ENCODE measurements at regions of chr12 and their contacts with region 1.

Region 1: DNA sequence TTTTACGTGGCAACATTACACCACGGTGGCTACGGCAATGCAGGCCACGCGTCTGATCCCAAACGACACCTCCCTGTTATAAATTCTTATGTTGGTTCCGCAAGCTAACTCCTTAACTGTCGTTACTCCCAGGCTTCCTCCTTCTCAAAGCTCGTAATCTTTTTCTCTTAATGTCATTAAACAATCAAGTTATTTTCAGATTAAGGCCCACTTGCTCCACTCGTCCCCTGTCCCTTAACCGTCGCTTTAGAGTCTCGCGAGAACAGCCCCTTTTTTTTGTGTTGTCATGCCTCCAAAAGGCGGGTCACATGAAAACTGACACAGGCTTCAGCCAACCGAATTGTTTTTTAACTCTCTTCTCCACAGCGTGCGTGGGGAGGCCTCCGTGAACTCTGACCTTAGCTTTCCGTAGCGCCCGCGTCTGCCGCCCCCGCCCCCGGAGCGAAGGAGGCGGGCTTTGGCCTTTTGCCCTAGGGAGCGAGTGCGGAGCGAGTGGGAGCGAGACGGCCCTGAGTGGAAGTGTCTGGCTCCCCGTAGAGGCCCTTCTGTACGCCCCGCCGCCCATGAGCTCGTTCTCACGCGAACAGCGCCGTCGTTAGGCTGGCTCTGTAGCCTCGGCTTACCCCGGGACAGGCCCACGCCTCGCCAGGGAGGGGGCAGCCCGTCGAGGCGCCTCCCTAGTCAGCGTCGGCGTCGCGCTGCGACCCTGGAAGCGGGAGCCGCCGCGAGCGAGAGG is at the start of gene CAND1:
- DNase-seq: peak; percentile 99
- ATAC-seq: peak; percentile 82
- H3K4me3 ChIP-seq: peak within 1 kb of the TSS; percentile 79
- H3K27ac ChIP-seq: peak within 1 kb of the TSS; percentile 96
- H3K4me1 ChIP-seq: peaks cover 13% of the 10 kb centered on the region
- H3K27me3 ChIP-seq: no peaks in the 10 kb centered on the region
- CTCF ChIP-seq: peak; percentile 9 to 30 (median 20); a peak in 1 of 6 replicates
- EP300 ChIP-seq: peak in 1 of 2 experiments; percentile 65; a peak in 1 of 4 replicates
- POLR2A ChIP-seq: peak; percentile 94
- RAD21 ChIP-seq: no peak
- polyA plus RNA-seq, gene CAND1: 34.5 to 44.0 TPM

Region 2: GRCh38 chr12:67025543-67026114 is 243.4 kb before region 1 on chr12:
- CTCF ChIA-PET with region 1: no interaction called
- POLR2A ChIA-PET with region 1: no interaction called
- RAD21 ChIA-PET with region 1: no interaction called
- SMC1A ChIA-PET with region 1: no interaction called
- in situ Hi-C with region 1: no loop called
- intact Hi-C with region 1: no loop called
- DNase-seq: no peak
- ATAC-seq: peak; percentile 82
- H3K4me3 ChIP-seq: no peak overlapping the region
- H3K27ac ChIP-seq: no peak overlapping the region
- H3K4me1 ChIP-seq: no peaks in the 10 kb centered on the region
- H3K27me3 ChIP-seq: no peaks in the 10 kb centered on the region
- CTCF ChIP-seq: peak; percentile 53 to 77 (median 69); a peak in 5 of 6 replicates
- EP300 ChIP-seq: no peak
- POLR2A ChIP-seq: no peak
- RAD21 ChIP-seq: peak; percentile 57

Region 3: GRCh38 chr12:67161322-67161918 is 107.6 kb before region 1 on chr12:
- CTCF ChIA-PET with region 1: interaction called, 12 read pairs
- POLR2A ChIA-PET with region 1: no interaction called
- RAD21 ChIA-PET with region 1: interaction called, 16 read pairs
- SMC1A ChIA-PET with region 1: interaction called, 7 read pairs
- in situ Hi-C with region 1: no loop called
- intact Hi-C with region 1: loop called (anchors 5 kb)
- DNase-seq: no peak
- ATAC-seq: peak; percentile 82
- H3K4me3 ChIP-seq: no peak overlapping the region
- H3K27ac ChIP-seq: no peak overlapping the region
- H3K4me1 ChIP-seq: no peaks in the 10 kb centered on the region
- H3K27me3 ChIP-seq: no peaks in the 10 kb centered on the region; a peak in 1 of 4 replicates
- CTCF ChIP-seq: peak; percentile 46 to 58 (median 56)
- EP300 ChIP-seq: no peak
- POLR2A ChIP-seq: no peak
- RAD21 ChIP-seq: peak; percentile 59

Region 4: DNA sequence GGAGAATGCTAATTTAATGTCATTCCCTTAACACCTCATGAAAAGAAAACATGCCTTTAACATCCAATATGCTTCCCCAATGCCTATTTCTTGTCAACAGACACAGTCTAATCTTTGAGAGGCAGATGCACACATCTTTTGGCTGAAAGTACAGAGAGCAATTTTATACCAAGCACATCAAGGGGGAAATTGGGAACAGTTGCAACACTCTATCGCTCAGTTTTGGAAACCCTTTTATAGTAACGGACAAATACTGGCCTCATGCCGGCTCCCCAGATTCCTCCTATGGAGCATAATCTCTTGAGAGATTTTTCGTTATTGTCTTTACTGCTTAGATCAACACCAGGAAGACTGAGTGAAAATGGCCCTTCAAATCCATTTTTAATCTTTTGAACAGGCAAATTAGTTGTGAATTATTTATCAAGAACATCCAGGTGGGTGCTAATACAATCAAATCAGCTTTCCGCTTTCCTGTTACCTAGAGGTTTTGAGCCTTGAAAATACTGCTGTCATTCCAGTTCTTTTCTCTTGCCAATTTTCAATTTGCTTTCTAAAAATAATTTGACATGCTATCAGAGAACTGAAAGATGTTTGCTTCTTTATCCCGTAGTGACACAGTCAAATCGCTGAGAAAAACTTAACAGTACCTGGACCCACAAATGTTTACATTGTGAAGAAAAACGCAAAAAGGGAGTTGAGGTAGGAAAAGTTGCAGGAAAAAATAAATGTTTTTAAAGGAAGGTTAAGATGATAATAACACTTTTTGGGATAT is 60.6 kb before region 1 on chr12:
- CTCF ChIA-PET with region 1: no interaction called
- POLR2A ChIA-PET with region 1: no interaction called
- RAD21 ChIA-PET with region 1: no interaction called
- SMC1A ChIA-PET with region 1: no interaction called
- in situ Hi-C with region 1: no loop called
- intact Hi-C with region 1: no loop called
- DNase-seq: no peak
- ATAC-seq: no peak
- H3K4me3 ChIP-seq: no peak overlapping the region
- H3K27ac ChIP-seq: no peak overlapping the region
- H3K4me1 ChIP-seq: no peaks in the 10 kb centered on the region
- H3K27me3 ChIP-seq: no peaks in the 10 kb centered on the region; a peak in 1 of 4 replicates
- CTCF ChIP-seq: no peak
- EP300 ChIP-seq: no peak
- POLR2A ChIP-seq: no peak
- RAD21 ChIP-seq: no peak

Region 5: DNA sequence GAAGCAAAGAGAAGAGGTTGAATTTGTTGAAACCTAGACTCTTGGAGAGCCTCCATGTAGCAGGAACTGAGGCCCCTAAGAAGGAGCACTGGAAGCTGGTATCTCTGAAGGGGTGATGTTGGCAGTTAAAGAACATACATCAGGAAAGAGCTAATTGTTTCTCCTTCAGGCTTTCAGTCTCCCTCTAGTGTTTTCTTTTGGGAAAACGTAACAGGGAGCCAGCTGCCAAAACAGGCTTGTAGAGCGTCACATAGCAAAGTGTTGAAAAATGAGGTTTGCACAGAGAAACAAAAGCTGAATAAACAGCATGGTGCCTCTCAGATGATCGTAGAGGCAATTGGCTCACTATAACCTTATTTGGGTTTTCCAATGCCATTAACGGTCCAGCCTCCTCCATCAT is 46.8 kb before region 1 on chr12:
- CTCF ChIA-PET with region 1: no interaction called
- POLR2A ChIA-PET with region 1: no interaction called
- RAD21 ChIA-PET with region 1: no interaction called
- SMC1A ChIA-PET with region 1: no interaction called
- in situ Hi-C with region 1: no loop called
- intact Hi-C with region 1: no loop called
- DNase-seq: no peak
- ATAC-seq: no peak
- H3K4me3 ChIP-seq: no peak overlapping the region
- H3K27ac ChIP-seq: no peak overlapping the region
- H3K4me1 ChIP-seq: no peaks in the 10 kb centered on the region
- H3K27me3 ChIP-seq: no peaks in the 10 kb centered on the region
- CTCF ChIP-seq: 0 out of 6 replicates have a peak, but pooled peaks of 1 of the 3 experiments have one; percentile 2
- EP300 ChIP-seq: no peak
- POLR2A ChIP-seq: no peak
- RAD21 ChIP-seq: no peak

Region 6: GRCh38 chr12:67280572-67280971 is 11.5 kb after region 1 on chr12:
- CTCF ChIA-PET with region 1: interaction called, 14 read pairs
- POLR2A ChIA-PET with region 1: interaction called, 8 read pairs
- RAD21 ChIA-PET with region 1: interaction called, 7 read pairs
- SMC1A ChIA-PET with region 1: interaction called, 12 read pairs
- in situ Hi-C with region 1: no loop called
- intact Hi-C with region 1: no loop called
- DNase-seq: no peak
- ATAC-seq: no peak
- H3K4me3 ChIP-seq: no peak overlapping the region
- H3K27ac ChIP-seq: no peak overlapping the region
- H3K4me1 ChIP-seq: no peaks in the 10 kb centered on the region; the same call in 1 of the 2 replicates
- H3K27me3 ChIP-seq: no peaks in the 10 kb centered on the region
- CTCF ChIP-seq: no peak
- EP300 ChIP-seq: no peak
- POLR2A ChIP-seq: no peak
- RAD21 ChIP-seq: no peak

Region 7: DNA sequence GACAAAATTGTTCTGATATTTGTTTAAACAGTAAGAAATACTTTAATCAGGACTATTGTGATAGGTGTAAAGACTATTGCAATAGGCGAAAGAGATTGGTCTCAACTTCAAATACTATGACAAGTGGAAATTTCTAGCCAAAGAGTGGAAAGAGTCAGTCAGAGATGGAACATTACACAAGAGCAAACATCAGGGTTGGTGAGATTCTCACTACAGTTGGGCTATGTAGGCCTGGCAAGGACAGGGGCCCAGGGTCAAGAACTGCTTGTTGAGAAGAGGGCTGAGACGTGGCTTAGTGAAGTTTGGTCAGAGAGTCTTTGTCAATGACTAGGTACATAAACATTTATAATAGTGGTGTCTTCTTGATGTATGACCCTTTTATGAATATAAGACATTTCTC is 19.5 kb after region 1 on chr12:
- CTCF ChIA-PET with region 1: interaction called, 5 read pairs
- POLR2A ChIA-PET with region 1: interaction called, 12 read pairs
- RAD21 ChIA-PET with region 1: interaction called, 6 read pairs
- SMC1A ChIA-PET with region 1: interaction called, 4 read pairs
- in situ Hi-C with region 1: no loop called
- intact Hi-C with region 1: no loop called
- DNase-seq: no peak
- ATAC-seq: peak; percentile 24; the same call in 1 of the 3 replicates
- H3K4me3 ChIP-seq: no peak overlapping the region
- H3K27ac ChIP-seq: no peak overlapping the region
- H3K4me1 ChIP-seq: no peaks in the 10 kb centered on the region
- H3K27me3 ChIP-seq: no peaks in the 10 kb centered on the region
- CTCF ChIP-seq: no peak
- EP300 ChIP-seq: no peak
- POLR2A ChIP-seq: no peak
- RAD21 ChIP-seq: no peak

Region 8: GRCh38 chr12:67394550-67394949 is 125.5 kb after region 1 on chr12:
- CTCF ChIA-PET with region 1: no interaction called
- POLR2A ChIA-PET with region 1: no interaction called
- RAD21 ChIA-PET with region 1: no interaction called
- SMC1A ChIA-PET with region 1: no interaction called
- in situ Hi-C with region 1: no loop called
- intact Hi-C with region 1: no loop called
- DNase-seq: no peak
- ATAC-seq: no peak
- H3K4me3 ChIP-seq: no peak overlapping the region
- H3K27ac ChIP-seq: no peak overlapping the region
- H3K4me1 ChIP-seq: no peaks in the 10 kb centered on the region
- H3K27me3 ChIP-seq: no peaks in the 10 kb centered on the region
- CTCF ChIP-seq: no peak
- EP300 ChIP-seq: no peak
- POLR2A ChIP-seq: no peak
- RAD21 ChIP-seq: no peak

Region 9: DNA sequence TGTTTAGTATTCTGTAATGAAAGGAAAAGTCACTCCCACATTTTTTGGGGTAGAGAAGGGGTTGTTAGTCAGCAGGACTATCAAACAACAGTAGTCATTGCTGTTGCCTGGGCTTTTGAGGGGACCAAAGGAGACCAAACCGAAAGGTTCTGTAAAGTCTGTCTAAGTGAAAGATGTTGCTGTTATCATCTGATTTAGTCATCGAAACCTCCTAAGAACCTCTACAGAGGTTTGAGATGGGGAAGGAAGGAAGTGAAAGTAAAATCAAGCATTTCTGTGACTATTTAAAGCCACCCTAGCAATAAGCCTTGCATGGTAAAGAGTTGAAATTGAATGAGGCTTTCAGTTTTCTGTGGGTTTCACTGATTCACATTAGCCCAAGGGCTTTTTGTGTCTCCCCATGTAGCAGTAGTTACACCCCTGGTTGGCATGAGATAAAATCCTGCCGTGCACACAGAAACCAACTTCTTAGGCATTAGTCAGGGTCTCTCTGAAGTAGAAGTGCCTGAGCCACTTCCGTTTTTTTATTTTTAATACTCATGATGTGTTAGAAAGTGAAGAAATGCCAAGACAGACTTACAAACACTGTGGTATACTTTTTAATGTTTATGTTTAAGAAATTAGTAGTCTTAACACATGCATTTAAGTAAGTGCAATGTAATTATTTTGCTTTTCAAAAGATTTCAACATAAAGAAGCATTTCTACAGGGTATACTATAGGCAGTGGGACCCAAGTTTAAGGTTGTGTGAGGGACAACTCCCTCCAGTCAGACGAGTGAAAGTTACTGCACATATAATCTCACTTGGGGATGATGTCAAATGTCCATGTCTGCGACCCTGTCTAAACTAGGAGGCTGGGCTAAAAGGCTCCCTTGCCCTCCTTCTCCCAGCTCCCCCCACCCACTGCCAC is 429.9 kb after region 1 on chr12:
- CTCF ChIA-PET with region 1: no interaction called
- POLR2A ChIA-PET with region 1: no interaction called
- RAD21 ChIA-PET with region 1: no interaction called
- SMC1A ChIA-PET with region 1: no interaction called
- in situ Hi-C with region 1: no loop called
- intact Hi-C with region 1: loop called (anchors 2 kb)
- DNase-seq: peak; percentile 98
- ATAC-seq: peak; percentile 96
- H3K4me3 ChIP-seq: no peak overlapping the region
- H3K27ac ChIP-seq: peak overlapping the region; percentile 64
- H3K4me1 ChIP-seq: peaks cover 28% of the 10 kb centered on the region
- H3K27me3 ChIP-seq: peaks cover 0 to 2% of the 10 kb centered on the region in 2 experiments; a peak in 1 of 4 replicates
- CTCF ChIP-seq: no peak
- EP300 ChIP-seq: peak; percentile 43 to 93; a peak in 3 of 4 replicates
- POLR2A ChIP-seq: no peak
- RAD21 ChIP-seq: peak; percentile 21